Activated CD4-positive, alpha-beta memory T cell treated with anti-CD3 and anti-CD28 coated beads, Interleukin-2, amount 10 ng/mL, durations not matched to agents 7 days and 5 days (primary cell): ENCODE measurements at regions of chr16 and their contacts with region 1.

Region 1: GRCh38 chr16:18801197-18801972 is at the start of gene ARL6IP1:
- DNase-seq: peak; percentile 99
- H3K4me3 Mint-ChIP-seq: peak within 1 kb of the TSS; percentile 96
- H3K27ac Mint-ChIP-seq: peak within 1 kb of the TSS; percentile 98
- H3K4me1 Mint-ChIP-seq: peaks cover 81% of the 10 kb centered on the region
- H3K27me3 Mint-ChIP-seq: no peaks in the 10 kb centered on the region
- total RNA-seq, gene ARL6IP1: 264 to 277 TPM

Region 2: GRCh38 chr16:18789850-18790724 is 11.3 kb before region 1 on chr16 and contains the start of gene RPS15A:
- CTCF ChIA-PET with region 1: interaction called, 144 read pairs
- POLR2A ChIA-PET with region 1: interaction called, 398 read pairs
- DNase-seq: peak; percentile 95
- H3K4me3 Mint-ChIP-seq: peak within 1 kb of the TSS; percentile 88
- H3K27ac Mint-ChIP-seq: peak within 1 kb of the TSS; percentile 82
- H3K4me1 Mint-ChIP-seq: peaks cover 60% of the 10 kb centered on the region
- H3K27me3 Mint-ChIP-seq: no peaks in the 10 kb centered on the region
- total RNA-seq, gene RPS15A: 1,725 to 1,747 TPM

Region 3: DNA sequence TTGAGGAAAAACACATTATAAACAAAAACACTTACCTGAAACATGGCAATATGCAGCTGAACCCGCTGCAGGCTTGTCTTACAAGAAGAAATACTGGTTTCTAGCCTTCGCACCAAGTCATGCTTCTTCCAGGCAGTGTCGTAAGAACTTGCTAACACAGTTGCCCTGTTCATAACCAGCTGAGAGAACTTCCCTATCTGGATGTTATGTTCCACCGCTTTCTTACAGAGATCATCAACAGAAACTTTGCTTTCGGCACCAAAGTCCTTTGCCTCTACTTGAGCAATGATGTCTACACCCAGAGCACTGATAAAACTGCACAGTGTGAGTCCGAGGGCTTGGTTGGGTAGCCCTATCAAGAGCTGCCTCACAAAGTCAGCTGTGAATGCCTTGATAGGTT is 27.9 kb after region 1 on chr16:
- CTCF ChIA-PET with region 1: interaction called, 23 read pairs
- POLR2A ChIA-PET with region 1: interaction called, 27 read pairs
- DNase-seq: no peak
- H3K4me3 Mint-ChIP-seq: no peak overlapping the region
- H3K27ac Mint-ChIP-seq: no peak overlapping the region
- H3K4me1 Mint-ChIP-seq: peaks cover 4% of the 10 kb centered on the region
- H3K27me3 Mint-ChIP-seq: no peaks in the 10 kb centered on the region

Region 4: GRCh38 chr16:18846416-18846815 is 45.0 kb after region 1 on chr16:
- CTCF ChIA-PET with region 1: interaction called, 11 read pairs
- POLR2A ChIA-PET with region 1: interaction called, 4 read pairs
- DNase-seq: no peak
- H3K4me3 Mint-ChIP-seq: no peak overlapping the region
- H3K27ac Mint-ChIP-seq: no peak overlapping the region
- H3K4me1 Mint-ChIP-seq: no peaks in the 10 kb centered on the region
- H3K27me3 Mint-ChIP-seq: no peaks in the 10 kb centered on the region

Region 5: GRCh38 chr16:18969050-18969854 is 167.9 kb after region 1 on chr16:
- CTCF ChIA-PET with region 1: interaction called, 14 read pairs
- POLR2A ChIA-PET with region 1: interaction called, 3 read pairs
- DNase-seq: peak; percentile 82
- H3K4me3 Mint-ChIP-seq: peak overlapping the region; percentile 21
- H3K27ac Mint-ChIP-seq: no peak overlapping the region
- H3K4me1 Mint-ChIP-seq: peaks cover 5% of the 10 kb centered on the region
- H3K27me3 Mint-ChIP-seq: peaks cover 2% of the 10 kb centered on the region

Region 6: DNA sequence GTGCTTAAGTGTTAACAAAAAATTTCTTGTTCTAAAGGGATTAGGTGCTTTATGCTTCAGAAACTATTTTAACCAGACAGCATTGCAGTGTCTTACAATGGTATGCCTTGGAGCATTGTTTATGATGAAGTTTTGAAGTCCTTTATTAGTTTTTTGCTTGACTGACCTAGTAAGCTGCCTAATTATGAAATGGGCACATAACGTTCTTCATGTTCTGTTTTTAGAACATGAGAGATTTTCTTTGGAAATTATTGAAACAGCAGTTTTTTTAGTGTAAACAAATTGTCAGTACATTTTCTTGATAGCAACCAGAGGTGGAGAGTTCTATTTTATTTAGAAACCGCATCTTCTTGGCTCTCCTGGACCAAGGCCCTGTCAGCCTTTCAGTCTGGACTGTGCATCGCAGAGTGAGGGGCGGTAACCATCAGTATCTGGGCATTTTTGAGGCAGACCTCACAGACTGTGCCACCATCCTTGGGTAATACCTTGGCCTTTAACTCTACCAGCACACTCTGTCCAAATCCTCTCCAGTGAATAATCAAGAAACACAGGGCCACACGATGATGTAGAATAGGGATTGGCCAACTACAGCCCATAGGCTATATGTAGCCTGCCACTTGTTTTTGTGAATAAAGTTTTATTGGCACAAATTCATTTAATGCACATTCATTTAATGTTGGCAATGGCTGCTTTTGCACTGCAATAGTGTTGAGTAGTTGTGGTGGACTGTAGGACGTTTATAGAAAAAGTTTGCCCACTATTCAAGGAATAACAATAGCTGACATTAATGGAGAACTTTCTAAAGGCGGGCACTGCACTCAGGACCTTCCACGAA is 835.3 kb after region 1 on chr16:
- CTCF ChIA-PET with region 1: no interaction called
- POLR2A ChIA-PET with region 1: no interaction called
- DNase-seq: no peak
- H3K4me3 Mint-ChIP-seq: no peak overlapping the region
- H3K27ac Mint-ChIP-seq: no peak overlapping the region
- H3K4me1 Mint-ChIP-seq: peaks cover 11% of the 10 kb centered on the region
- H3K27me3 Mint-ChIP-seq: no peaks in the 10 kb centered on the region